CD8-positive, alpha-beta memory T cell (primary cell): ENCODE measurements at regions of chr13 and their contacts with region 1.

Region 1: DNA sequence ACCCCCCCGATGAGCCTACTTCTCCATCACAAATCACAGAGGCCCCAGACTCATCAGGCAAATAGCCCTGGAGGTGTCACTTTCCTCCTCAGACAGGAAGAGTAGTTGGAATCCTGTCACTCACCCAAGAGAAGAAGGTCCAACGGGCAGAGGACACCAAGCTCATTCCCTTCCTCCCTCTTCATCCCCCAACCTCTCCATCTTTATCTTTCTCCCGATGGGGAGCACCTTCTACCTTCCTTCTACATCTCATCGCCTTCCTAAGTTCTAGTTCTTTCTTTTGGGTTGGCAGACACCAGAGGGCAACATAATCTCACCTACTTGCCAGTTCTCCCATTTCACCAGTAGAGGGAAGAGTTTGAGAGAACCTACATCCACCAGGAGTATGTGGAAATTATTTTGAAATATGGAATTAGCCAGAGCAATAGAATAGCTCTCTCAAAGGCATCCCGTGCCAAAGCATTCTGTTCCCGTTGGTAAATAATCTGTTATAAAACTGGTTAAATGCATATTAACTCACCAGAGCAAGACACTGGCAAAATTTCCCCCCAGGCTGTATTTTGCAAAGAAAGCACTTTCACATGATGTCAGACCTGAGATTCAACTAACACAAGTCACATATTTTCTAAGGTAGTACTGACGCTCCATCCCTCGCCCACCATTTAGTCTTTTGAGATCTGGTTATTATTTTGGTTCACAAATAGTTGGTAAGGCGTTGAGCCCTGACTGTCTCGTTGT is 55.0 kb downstream of the ZIC5 start:
- DNase-seq: peak in 2 of 5 donors; percentile 29 to 45
- H3K4me3 ChIP-seq: no peak overlapping the region
- H3K4me3 Mint-ChIP-seq: no peak overlapping the region
- H3K27ac ChIP-seq: no peak overlapping the region
- H3K27ac Mint-ChIP-seq: no peak overlapping the region
- H3K4me1 ChIP-seq: peaks cover 11% of the 10 kb centered on the region
- H3K4me1 Mint-ChIP-seq: peaks cover 9 to 16% (median 16%) of the 10 kb centered on the region in 3 donors
- H3K27me3 ChIP-seq: no peaks in the 10 kb centered on the region
- H3K27me3 Mint-ChIP-seq: peaks cover 0 to 5% of the 10 kb centered on the region in 2 donors

Region 2: GRCh38 chr13:99792079-99792921 is 124.2 kb before region 1 on chr13:
- CTCF ChIA-PET with region 1: no interaction called
- POLR2A ChIA-PET with region 1: no interaction called
- DNase-seq: no peak
- H3K4me3 ChIP-seq: no peak overlapping the region
- H3K4me3 Mint-ChIP-seq: no peak overlapping the region
- H3K27ac ChIP-seq: no peak overlapping the region
- H3K27ac Mint-ChIP-seq: no peak overlapping the region
- H3K4me1 ChIP-seq: no peaks in the 10 kb centered on the region
- H3K4me1 Mint-ChIP-seq: peaks cover 0 to 5% (median 0%) of the 10 kb centered on the region in 3 donors
- H3K27me3 ChIP-seq: no peaks in the 10 kb centered on the region
- H3K27me3 Mint-ChIP-seq: no peaks in the 10 kb centered on the region

Region 3: GRCh38 chr13:100514788-100515409 is 598.4 kb after region 1 on chr13:
- CTCF ChIA-PET with region 1: interaction called, 10 read pairs
- POLR2A ChIA-PET with region 1: no interaction called
- DNase-seq: peak; percentile 54 to 78 (median 60)
- H3K4me3 ChIP-seq: no peak overlapping the region
- H3K4me3 Mint-ChIP-seq: no peak overlapping the region
- H3K27ac ChIP-seq: no peak overlapping the region
- H3K27ac Mint-ChIP-seq: no peak overlapping the region
- H3K4me1 ChIP-seq: peaks cover 7% of the 10 kb centered on the region
- H3K4me1 Mint-ChIP-seq: peaks cover 9 to 18% (median 17%) of the 10 kb centered on the region in 3 donors
- H3K27me3 ChIP-seq: no peaks in the 10 kb centered on the region
- H3K27me3 Mint-ChIP-seq: no peaks in the 10 kb centered on the region